T-cell (primary cell): ENCODE measurements at regions of chr13 and their contacts with region 1.

Region 1: GRCh38 chr13:43764349-43764748 is 22.4 kb downstream of the ENOX1 start:
- DNase-seq: no peak
- ATAC-seq: no peak
- H3K4me3 ChIP-seq: no peak overlapping the region
- H3K4me3 Mint-ChIP-seq: no peak overlapping the region
- H3K27ac ChIP-seq: no peak overlapping the region
- H3K27ac Mint-ChIP-seq: no peak overlapping the region
- H3K4me1 ChIP-seq: no peaks in the 10 kb centered on the region
- H3K4me1 Mint-ChIP-seq: no peaks in the 10 kb centered on the region
- H3K27me3 ChIP-seq: no peaks in the 10 kb centered on the region
- H3K27me3 Mint-ChIP-seq: peaks cover 3 to 13% of the 10 kb centered on the region in 2 donors

Region 2: DNA sequence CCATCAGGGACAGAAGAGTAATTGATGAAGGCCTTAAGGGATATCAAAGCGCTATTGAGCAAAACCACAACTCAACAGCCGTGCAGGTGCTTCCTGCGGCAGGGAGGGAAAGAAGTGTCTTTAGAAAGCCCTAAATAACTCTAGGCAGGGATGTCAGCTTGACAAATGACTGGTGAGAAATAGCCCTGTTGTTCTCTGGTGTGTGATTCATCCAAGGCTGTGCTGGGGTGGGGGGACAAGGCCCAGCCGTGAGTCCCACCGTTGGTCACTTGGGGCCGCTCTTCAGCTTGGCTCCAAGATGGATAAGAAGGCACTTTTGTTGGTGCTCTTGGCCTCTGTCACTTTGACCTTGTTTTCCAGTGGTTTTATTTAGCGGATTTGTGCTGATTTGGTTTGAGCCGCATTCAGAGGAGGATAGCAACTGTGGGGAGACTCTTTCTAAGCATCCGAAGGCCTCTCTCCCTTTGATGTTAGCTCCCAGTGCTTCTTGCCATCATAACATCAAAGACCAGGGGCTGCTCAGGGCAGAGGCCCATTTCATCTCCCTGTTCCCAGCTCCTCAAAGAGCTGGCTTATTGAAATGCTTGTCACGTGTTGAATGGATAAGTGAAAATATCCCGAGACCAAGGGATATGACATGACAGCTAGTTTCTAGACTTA is 479.0 kb after region 1 on chr13:
- CTCF ChIA-PET with region 1: interaction called in 1 of 2 experiments, 11 read pairs
- POLR2A ChIA-PET with region 1: no interaction called
- DNase-seq: peak in 9 of 35 experiments; percentile 9 to 35 (median 18)
- ATAC-seq: peak in 3 of 4 experiments; percentile 32 to 63 (median 45)
- H3K4me3 ChIP-seq: no peak overlapping the region
- H3K4me3 Mint-ChIP-seq: no peak overlapping the region
- H3K27ac ChIP-seq: no peak overlapping the region
- H3K27ac Mint-ChIP-seq: no peak overlapping the region
- H3K4me1 ChIP-seq: peaks cover 0 to 4% of the 10 kb centered on the region in 2 experiments
- H3K4me1 Mint-ChIP-seq: peaks cover 6 to 13% (median 6%) of the 10 kb centered on the region in 3 donors
- H3K27me3 ChIP-seq: no peaks in the 10 kb centered on the region
- H3K27me3 Mint-ChIP-seq: peaks cover 0 to 3% of the 10 kb centered on the region in 2 donors